K562 (cell line): ENCODE measurements at regions of chr7 and their contacts with region 1.

Region 1: DNA sequence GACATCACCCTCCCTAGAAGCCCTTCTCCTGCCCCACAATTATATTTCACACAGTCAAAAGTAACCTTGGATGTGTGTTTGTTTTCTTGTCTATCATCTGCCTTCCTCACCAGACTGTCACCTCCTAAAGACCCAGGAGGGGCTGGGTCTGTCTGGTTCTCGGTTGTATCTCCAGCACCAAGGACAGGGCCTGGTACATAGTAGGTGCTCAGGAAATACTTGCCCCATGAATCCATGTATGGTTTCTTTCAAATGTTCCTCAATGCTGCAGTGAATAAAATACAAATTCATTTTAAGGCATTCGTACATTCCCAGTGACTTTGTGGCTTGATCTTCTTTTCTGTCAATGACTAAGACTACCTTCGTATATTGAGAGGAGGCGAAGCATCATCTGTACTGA is 122.9 kb upstream of the ZNF716 start:
- DNase-seq: no peak
- ATAC-seq: no peak
- H3K4me3 ChIP-seq: no peak overlapping the region
- H3K27ac ChIP-seq: no peak overlapping the region
- H3K4me1 ChIP-seq: no peaks in the 10 kb centered on the region
- H3K27me3 ChIP-seq: no peaks in the 10 kb centered on the region
- CTCF ChIP-seq: no peak
- EP300 ChIP-seq: no peak
- POLR2A ChIP-seq: no peak
- RAD21 ChIP-seq: no peak

Region 2: DNA sequence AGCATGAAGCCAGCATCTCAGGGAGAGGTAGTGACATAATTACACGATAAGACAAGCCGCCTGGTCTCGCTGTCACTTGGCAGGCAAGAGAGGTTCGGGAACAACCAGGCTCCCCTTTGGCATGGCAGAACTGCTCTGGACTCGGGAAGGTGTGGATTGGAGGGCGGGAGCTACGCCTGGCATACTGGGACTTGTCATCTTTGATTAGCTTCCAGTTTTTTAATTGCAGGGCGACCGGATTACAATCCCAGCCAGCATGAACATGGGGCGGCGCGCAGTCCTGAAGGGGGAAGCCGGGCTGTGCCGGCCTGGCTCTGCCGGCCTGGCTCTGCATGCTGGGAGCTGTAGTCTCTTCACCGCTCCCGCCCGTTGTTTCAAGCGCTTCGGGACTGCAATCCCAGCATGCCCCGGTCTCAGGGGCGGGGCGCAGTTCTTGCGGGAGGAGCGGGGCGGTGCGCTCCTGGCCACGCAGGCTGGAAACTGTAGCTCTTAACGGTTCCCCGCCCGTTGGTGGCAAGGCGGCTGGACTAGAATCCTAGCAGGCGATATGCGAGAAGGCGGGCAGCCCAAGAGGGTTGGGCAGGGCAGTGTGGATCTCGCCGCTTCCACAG is 77.4 kb after region 1 on chr7:
- CTCF ChIA-PET with region 1: no interaction called
- POLR2A ChIA-PET with region 1: no interaction called
- in situ Hi-C with region 1: no loop called
- intact Hi-C with region 1: no loop called
- DNase-seq: peak in 2 of 4 experiments; percentile 5 to 8
- ATAC-seq: peak; percentile 84
- H3K4me3 ChIP-seq: no peak overlapping the region
- H3K27ac ChIP-seq: no peak overlapping the region
- H3K4me1 ChIP-seq: no peaks in the 10 kb centered on the region
- H3K27me3 ChIP-seq: no peaks in the 10 kb centered on the region
- CTCF ChIP-seq: no peak
- EP300 ChIP-seq: no peak
- POLR2A ChIP-seq: no peak
- RAD21 ChIP-seq: no peak

Region 3: DNA sequence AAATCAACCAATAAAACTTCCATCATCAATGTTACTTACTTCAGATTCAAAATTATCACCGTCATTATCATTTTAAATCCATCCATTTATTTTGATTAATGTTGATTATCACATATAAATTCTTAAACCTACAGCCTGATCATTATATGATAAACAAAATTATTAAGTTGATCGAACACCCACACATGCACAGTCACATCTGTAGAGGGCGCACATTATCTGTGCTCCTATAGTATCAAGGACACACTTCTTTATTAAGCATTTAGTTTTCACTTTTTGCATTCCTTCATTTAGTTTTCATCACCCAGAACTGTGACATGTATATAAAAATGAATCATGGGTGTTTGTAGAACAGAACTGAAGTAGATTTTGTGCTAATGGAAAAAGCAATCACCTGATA is 96.7 kb after region 1 on chr7:
- CTCF ChIA-PET with region 1: interaction called, 10 read pairs
- POLR2A ChIA-PET with region 1: no interaction called
- in situ Hi-C with region 1: no loop called
- intact Hi-C with region 1: no loop called
- DNase-seq: no peak
- ATAC-seq: no peak
- H3K4me3 ChIP-seq: no peak overlapping the region
- H3K27ac ChIP-seq: no peak overlapping the region
- H3K4me1 ChIP-seq: no peaks in the 10 kb centered on the region
- H3K27me3 ChIP-seq: no peaks in the 10 kb centered on the region
- CTCF ChIP-seq: no peak; a peak in 1 of 6 replicates
- EP300 ChIP-seq: no peak
- POLR2A ChIP-seq: no peak
- RAD21 ChIP-seq: no peak